B cell (primary cell): ENCODE measurements at regions of chr19 and their contacts with region 1.

Region 1: DNA sequence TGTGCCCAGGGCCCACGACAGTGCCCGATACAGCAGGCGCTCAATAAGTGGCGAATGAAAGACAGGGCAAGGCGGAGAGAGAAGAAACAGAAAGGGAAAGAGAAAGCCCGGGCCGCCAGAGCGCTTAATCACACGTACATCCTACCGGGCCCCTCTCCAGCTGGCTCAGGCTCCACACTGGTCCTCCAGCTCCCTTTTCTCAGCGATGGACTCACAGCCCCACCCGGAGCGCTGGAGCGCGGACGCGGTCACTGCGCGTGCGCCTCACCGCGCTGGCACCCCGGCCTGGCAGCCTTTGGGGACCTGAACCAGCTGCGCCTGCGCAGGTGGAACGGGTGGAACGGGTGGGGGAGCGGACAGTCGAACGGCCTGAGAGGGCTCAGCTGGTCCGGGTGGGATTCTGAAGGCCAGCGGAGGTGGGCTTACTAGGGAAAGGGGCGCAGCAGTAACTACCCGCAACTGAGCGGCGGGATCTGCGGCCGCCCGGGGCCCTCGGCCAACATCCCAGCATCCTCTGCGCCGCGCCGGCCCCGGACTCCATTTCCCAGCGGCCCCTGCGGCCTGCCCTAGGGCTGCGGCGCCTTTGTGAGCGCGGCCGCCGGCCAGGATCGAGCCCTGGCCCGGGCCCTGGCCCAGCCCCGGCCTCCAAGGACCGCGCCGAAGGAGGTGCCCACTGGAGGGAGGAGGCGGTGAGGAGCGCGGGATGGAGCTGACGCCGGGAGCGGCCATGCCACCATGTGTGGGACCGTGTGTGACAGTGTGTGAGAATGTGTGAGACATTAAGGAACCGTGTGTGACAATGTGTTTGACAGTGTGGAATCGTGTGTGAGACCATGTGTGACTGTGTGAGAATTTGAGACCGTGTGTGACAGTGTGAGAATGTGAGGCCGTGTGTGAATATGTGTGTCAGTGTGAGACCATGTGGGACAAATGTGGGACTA is at the start of gene ZNF583:
- DNase-seq: peak; percentile 95
- ATAC-seq: peak; percentile 89
- H3K4me3 ChIP-seq: peak within 1 kb of the TSS; percentile 75 to 97 (median 84)
- H3K4me3 Mint-ChIP-seq: peak within 1 kb of the TSS; percentile 92
- H3K27ac ChIP-seq: peak within 1 kb of the TSS; percentile 90 to 92
- H3K27ac Mint-ChIP-seq: peak within 1 kb of the TSS; percentile 92
- H3K4me1 ChIP-seq: peaks cover 14 to 19% of the 10 kb centered on the region in 2 donors
- H3K4me1 Mint-ChIP-seq: peaks cover 24% of the 10 kb centered on the region
- H3K27me3 ChIP-seq: no peaks in the 10 kb centered on the region
- H3K27me3 Mint-ChIP-seq: no peaks in the 10 kb centered on the region
- CTCF ChIP-seq: no peak
- total RNA-seq, gene ZNF583: 11.1 and 11.7 TPM in 2 replicates

Region 2: GRCh38 chr19:56121180-56122167 is 282.6 kb before region 1 on chr19 and contains the start of gene ZNF787:
- CTCF ChIA-PET with region 1: no interaction called
- POLR2A ChIA-PET with region 1: no interaction called
- intact Hi-C with region 1: loop called (anchors 5 kb)
- DNase-seq: peak; percentile 98
- ATAC-seq: peak; percentile 83
- H3K4me3 ChIP-seq: peak within 1 kb of the TSS; percentile 37 to 95 (median 76)
- H3K4me3 Mint-ChIP-seq: peak within 1 kb of the TSS; percentile 94
- H3K27ac ChIP-seq: peak within 1 kb of the TSS; percentile 91 to 99
- H3K27ac Mint-ChIP-seq: peak within 1 kb of the TSS; percentile 99
- H3K4me1 ChIP-seq: peaks cover 18 to 29% of the 10 kb centered on the region in 2 donors
- H3K4me1 Mint-ChIP-seq: peaks cover 40% of the 10 kb centered on the region
- H3K27me3 ChIP-seq: no peaks in the 10 kb centered on the region
- H3K27me3 Mint-ChIP-seq: no peaks in the 10 kb centered on the region
- CTCF ChIP-seq: no peak
- total RNA-seq, gene ZNF787: 47.7 and 47.9 TPM in 2 replicates

Region 3: GRCh38 chr19:56321989-56322440 is 82.0 kb before region 1 on chr19:
- CTCF ChIA-PET with region 1: no interaction called
- POLR2A ChIA-PET with region 1: no interaction called
- intact Hi-C with region 1: no loop called
- DNase-seq: peak; percentile 44
- ATAC-seq: peak; percentile 33
- H3K4me3 ChIP-seq: no peak overlapping the region
- H3K4me3 Mint-ChIP-seq: no peak overlapping the region
- H3K27ac ChIP-seq: peak overlapping the region in 1 of 2 donors; percentile 14
- H3K27ac Mint-ChIP-seq: no peak overlapping the region
- H3K4me1 ChIP-seq: peaks cover 3 to 9% of the 10 kb centered on the region in 2 donors
- H3K4me1 Mint-ChIP-seq: peaks cover 9% of the 10 kb centered on the region
- H3K27me3 ChIP-seq: no peaks in the 10 kb centered on the region
- H3K27me3 Mint-ChIP-seq: no peaks in the 10 kb centered on the region
- CTCF ChIP-seq: no peak

Region 4: DNA sequence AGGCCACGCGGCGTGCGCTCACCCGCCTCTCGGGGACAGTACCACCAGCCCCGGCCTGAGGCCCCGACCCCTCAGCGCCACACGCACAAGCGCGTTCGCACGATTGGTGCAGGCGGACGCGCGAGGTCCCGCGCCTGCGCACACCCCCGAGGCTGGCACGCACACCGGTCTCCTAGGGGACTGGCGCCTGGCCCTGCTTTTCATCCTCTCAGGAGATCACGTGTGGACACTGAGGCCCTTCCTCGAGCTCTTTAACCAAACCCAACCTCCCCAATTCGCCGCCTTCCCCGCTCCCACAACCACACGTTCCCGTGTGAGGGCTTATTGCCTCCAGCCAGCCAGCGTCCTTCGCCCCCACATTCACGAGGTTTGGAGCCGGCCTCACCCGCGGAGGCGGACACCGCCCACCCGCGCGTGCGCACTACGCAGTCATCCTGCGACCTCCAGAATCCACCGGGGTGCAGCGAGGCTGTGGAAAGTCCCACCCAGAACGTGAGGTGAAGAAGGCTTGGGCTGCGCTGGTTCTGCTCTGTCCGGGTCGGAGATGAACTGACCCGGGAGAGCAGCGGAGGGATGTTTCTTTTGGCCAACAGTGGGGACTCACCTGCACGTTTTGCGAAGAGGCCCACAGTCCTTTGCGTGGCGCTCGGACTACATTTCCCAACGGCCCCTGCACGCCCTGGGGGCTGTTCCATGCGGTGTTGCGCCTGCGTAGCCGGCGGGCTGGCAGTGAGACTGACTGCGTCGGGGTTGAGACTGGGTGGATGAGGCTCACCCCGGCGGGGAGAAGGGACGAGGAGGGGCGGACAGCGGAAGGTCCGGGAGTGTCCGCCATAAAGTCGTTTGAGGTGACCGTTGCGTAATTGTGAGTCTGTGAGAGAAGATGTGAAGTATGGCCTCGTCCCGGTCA is 73.7 kb after region 1 on chr19:
- CTCF ChIA-PET with region 1: no interaction called
- POLR2A ChIA-PET with region 1: no interaction called
- intact Hi-C with region 1: loop called (anchors 2 kb)
- DNase-seq: peak; percentile 93
- ATAC-seq: peak; percentile 80
- H3K4me3 ChIP-seq: peak overlapping the region; percentile 69 to 76 (median 70)
- H3K4me3 Mint-ChIP-seq: peak overlapping the region; percentile 99
- H3K27ac ChIP-seq: peak overlapping the region; percentile 87 to 94
- H3K27ac Mint-ChIP-seq: peak overlapping the region; percentile 94
- H3K4me1 ChIP-seq: peaks cover 11 to 20% of the 10 kb centered on the region in 2 donors
- H3K4me1 Mint-ChIP-seq: peaks cover 18% of the 10 kb centered on the region
- H3K27me3 ChIP-seq: no peaks in the 10 kb centered on the region
- H3K27me3 Mint-ChIP-seq: peaks cover 19% of the 10 kb centered on the region
- CTCF ChIP-seq: no peak

Region 5: GRCh38 chr19:56538254-56538760 is 134.3 kb after region 1 on chr19:
- CTCF ChIA-PET with region 1: no interaction called
- POLR2A ChIA-PET with region 1: no interaction called
- intact Hi-C with region 1: loop called (anchors 1 kb)
- DNase-seq: peak; percentile 96
- ATAC-seq: peak; percentile 89
- H3K4me3 ChIP-seq: peak overlapping the region; percentile 39 to 84 (median 69)
- H3K4me3 Mint-ChIP-seq: peak overlapping the region; percentile 93
- H3K27ac ChIP-seq: peak overlapping the region; percentile 80 to 83
- H3K27ac Mint-ChIP-seq: peak overlapping the region; percentile 99
- H3K4me1 ChIP-seq: peaks cover 6 to 17% of the 10 kb centered on the region in 2 donors
- H3K4me1 Mint-ChIP-seq: peaks cover 19% of the 10 kb centered on the region
- H3K27me3 ChIP-seq: no peaks in the 10 kb centered on the region
- H3K27me3 Mint-ChIP-seq: no peaks in the 10 kb centered on the region
- CTCF ChIP-seq: no peak

Region 6: DNA sequence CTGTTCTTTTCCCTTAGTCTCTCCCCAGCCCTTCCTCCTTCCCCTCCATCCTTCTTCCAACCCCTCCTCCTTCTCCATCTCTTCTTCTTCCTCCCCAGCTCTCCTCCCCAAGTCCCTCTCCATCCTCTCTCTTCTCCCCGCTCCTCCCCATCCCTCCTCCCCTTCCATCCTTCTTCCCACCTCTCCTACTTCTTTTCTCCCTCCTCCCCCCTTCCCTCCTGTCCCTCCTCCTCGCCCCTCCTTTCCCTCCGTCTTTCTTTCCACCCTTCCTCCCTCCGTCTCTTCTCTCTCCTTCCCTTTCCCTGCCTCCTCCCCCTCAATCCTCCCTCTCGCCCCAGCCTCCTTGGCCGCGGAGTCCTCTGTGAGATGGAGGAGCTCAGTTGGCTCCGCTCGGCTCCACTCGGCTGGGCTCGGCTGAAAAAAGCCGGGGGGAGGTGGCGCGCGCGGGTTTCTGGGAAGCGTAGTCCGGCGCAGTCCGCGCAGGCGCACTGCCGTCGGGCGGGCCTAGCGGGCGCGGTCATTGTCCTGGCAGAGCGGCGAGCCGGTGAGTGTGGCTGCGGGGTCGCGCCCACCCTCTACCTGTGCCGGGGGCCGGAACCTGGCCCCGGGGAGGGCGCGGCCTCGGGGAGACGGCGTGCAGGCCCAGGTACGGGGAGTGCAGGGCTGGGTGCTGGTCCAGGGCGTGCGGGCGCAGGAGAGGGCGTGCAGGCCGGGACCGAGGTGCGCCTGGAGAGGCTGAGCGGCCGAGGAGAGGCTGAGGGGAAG is 190.9 kb after region 1 on chr19 and contains the start of gene ZNF71:
- CTCF ChIA-PET with region 1: no interaction called
- POLR2A ChIA-PET with region 1: no interaction called
- intact Hi-C with region 1: loop called (anchors 1 kb)
- DNase-seq: peak; percentile 89
- ATAC-seq: peak; percentile 94
- H3K4me3 ChIP-seq: peak within 1 kb of the TSS; percentile 22 to 88 (median 68)
- H3K4me3 Mint-ChIP-seq: peak within 1 kb of the TSS; percentile 93
- H3K27ac ChIP-seq: peak within 1 kb of the TSS; percentile 49 to 88
- H3K27ac Mint-ChIP-seq: peak within 1 kb of the TSS; percentile 90
- H3K4me1 ChIP-seq: peaks cover 11 to 20% of the 10 kb centered on the region in 2 donors
- H3K4me1 Mint-ChIP-seq: peaks cover 19% of the 10 kb centered on the region
- H3K27me3 ChIP-seq: peaks cover 0 to 4% (median 0%) of the 10 kb centered on the region in 4 experiments
- H3K27me3 Mint-ChIP-seq: no peaks in the 10 kb centered on the region
- CTCF ChIP-seq: no peak
- total RNA-seq, gene ZNF71: 9.0 and 9.3 TPM in 2 replicates